Posterior cingulate gyrus (tissue), 11 donors: ENCODE measurements at regions of chr7 and their contacts with region 1.

Region 1: DNA sequence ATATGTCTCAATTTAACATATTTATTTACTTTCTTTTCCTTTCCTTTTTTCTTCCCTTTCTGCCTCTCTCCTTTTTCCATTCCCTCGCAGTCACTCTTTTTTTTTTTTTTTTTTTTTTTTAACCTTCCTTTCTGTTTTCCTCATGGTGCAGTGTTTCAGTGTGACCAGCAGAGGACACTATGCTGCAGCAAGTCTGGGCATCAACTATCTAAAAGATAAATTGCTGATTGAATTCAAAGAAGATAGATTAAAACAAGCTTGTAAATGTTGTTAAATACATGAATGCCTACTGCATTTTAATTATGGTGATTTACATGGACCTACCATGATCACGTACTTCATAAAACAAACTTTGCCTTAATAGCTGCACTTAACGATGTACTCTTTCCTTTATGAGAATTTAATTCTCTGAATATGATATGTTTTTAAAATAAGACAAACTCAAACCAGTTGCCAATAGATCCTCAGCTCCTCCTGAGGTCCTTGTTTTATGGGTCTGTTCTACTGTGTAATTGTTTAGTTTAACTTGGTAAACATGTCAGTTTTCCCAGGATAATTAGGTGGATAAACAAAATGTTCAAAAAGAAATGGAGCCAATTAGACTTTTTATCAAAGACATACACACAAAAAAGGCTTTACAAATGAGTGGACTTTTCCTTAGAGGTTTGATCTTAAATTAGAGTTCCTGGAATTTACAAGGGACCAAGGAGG is 101.0 kb upstream of the AGR3 start:
- DNase-seq: peak in 5 of 10 donors; percentile 11 to 83 (median 27)

Region 2: DNA sequence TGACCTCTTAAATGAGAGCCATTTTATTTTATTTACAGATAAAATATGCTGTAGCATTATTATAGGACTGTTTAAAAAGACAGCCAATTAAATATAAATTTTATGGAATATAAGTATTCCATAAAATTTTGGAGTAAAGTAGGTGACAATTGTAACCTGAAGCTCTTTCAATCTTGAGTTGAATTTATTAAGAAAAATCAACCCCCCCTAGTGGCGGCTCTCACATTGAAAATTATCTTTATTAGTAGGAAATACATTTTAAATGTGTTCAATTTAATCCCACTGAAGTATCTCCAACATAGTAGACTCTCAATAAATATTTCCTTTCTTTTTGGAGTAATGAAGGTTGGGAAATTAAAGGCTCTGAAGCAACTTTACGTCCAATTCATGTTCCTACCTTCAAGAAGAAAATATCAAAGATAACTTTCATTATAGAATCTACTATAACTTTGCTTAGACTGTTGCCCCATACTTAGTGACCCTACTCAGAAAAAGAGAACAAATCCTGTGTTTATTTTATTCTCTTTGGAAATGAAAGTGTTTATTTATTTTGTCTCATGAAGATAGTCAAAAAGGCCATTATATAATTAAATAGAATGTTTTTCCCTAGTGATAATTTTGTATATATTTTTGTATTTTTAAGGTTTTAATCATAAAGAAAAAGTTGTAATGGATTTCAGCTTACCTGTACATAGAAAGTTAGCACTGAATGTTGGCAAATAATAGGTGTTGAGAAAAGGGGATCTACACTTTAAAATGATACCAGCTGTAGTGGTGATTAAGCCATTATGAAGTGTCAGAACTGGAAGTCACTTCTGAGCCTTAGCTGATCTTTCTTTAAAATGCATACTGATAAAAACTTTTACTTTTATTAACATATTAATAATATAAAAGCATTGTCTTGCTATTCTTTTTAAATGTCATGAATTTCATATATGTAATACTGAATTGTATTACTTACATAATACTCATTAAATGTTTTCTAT is 319.0 kb after region 1 on chr7:
- intact Hi-C with region 1: loop called (anchors 2 kb)
- DNase-seq: peak in 2 of 10 donors; percentile 27 to 44

Region 3: GRCh38 chr7:17530741-17531417 is 548.1 kb after region 1 on chr7:
- intact Hi-C with region 1: loop called (anchors 2 kb)
- DNase-seq: no peak

Region 4: DNA sequence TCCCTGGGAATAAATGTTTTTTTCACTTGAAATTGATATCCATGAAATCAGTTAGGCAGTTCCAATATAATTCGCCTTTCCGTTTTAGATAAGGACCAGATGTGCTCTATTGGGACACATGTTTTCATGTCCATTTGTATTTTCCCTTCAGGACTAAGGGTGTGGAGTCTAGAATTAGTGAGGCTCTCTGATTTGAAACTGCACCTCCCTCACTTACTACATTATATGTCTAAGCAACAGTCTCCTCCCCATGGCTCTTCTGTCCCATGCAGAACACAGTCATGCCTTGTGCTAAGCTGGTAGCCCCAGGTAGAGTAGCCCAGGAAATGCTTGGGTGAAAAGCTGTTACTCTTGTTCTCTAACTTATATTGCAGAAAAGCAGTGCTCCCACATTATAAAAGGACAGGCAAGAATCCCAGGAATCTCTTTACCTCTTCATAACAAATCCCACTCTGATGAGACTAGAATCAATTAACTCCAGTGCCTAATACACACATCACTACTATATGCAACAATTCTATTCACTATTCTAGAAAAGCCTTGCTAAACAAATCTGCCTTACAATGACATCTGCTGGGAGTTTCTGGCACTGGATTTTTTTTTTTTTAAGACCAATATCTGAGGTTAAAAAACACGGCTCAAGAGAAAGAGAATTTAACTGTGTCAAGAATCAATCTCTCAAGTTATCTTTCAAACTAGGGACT is 663.6 kb after region 1 on chr7:
- intact Hi-C with region 1: loop called (anchors 5 kb)
- DNase-seq: no peak